AG04449 (cell line): ENCODE measurements at regions of chr10 and their contacts with region 1.

Region 1: GRCh38 chr10:102151774-102152544 is at the start of gene NOLC1:
- DNase-seq: peak; percentile 96
- H3K4me3 ChIP-seq: peak within 1 kb of the TSS; percentile 99
- CTCF ChIP-seq: no peak

Region 2: GRCh38 chr10:102132563-102133372 is 19.2 kb before region 1 on chr10 and contains the start of gene PPRC1:
- CTCF ChIA-PET with region 1: interaction called, 20 read pairs
- POLR2A ChIA-PET with region 1: interaction called, 5 read pairs
- DNase-seq: peak; percentile 91
- H3K4me3 ChIP-seq: peak within 1 kb of the TSS; percentile 96
- CTCF ChIP-seq: peak; percentile 76

Region 3: GRCh38 chr10:102140184-102140583 is 11.8 kb before region 1 on chr10:
- CTCF ChIA-PET with region 1: interaction called, 20 read pairs
- POLR2A ChIA-PET with region 1: interaction called, 4 read pairs
- DNase-seq: no peak
- H3K4me3 ChIP-seq: no peak overlapping the region
- CTCF ChIP-seq: no peak

Region 4: DNA sequence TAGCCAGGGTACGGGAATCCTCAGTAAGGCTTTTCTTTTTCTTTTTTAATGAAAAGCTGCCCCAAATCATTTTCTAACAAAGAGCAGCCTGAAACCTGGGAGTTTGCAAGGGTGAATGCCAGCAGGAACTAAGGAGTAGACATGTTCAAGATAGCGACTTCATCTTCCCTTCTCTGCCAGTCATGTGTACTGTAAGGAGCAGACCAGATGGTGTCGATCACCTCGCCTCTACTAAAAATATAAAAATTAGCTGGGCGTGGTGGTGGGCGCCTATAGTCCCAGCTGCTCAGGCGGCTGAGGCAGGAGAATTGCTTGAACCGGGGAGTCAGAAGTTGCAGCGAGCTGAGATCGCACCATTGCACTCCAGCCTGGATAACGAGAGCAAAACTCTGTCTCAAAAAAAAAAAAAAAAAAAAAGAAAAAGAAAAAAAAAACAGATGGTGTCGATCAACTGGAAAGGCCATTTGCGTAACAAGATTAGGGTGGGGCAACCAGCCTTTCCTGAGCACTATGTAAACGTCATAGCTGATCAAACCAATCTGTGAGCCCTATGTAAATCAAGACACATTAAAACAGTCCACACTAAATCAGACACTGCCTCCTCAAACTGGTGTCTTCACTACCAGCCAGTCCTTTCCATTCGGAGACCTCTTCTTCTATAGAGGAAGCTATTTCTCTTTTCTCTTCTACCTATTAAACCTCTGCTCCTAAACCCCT is 34.0 kb after region 1 on chr10:
- CTCF ChIA-PET with region 1: no interaction called
- POLR2A ChIA-PET with region 1: no interaction called
- DNase-seq: no peak
- H3K4me3 ChIP-seq: no peak overlapping the region
- CTCF ChIP-seq: no peak

Region 5: DNA sequence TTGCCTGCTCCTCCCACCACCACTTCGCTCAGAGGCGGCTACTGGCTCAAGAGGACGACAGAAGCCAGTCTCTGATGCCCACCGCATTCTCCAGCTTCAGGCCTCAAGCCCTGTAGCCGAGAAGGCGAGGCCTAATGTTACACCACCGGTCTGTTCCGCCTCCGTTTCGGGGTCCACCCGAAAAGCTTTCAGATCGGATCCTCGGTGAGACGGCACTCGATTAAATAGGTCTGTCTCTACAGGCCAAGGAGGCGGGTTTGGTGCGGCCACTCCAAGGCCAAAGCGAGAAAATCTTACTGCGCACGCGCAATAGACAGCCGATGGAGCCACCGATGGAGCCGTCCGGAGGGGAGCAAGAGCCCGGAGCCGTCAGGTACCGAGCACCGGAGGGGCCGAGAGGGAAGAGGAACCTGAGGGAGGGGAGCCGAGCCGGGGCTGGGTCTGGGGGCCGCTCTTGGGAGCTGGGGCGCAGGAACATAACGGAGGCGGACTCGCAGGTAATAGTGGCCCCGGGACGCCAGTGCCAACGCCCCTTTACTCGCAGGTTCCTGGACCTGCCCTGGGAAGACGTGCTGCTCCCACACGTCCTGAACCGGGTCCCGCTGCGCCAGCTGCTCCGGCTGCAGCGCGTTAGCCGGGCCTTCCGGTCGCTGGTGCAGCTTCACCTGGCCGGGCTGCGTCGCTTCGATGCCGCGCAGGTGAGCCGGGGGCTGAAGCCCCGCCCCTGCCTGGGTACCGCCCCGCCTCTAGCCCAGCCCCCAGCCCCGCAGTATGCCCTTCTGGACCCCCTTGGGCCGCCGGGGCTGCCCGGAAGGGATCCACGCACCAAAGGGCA is 269.1 kb after region 1 on chr10 and contains the start of gene FBXL15:
- CTCF ChIA-PET with region 1: no interaction called
- POLR2A ChIA-PET with region 1: no interaction called
- DNase-seq: peak; percentile 71
- H3K4me3 ChIP-seq: peak within 1 kb of the TSS; percentile 92
- CTCF ChIP-seq: no peak